Right lobe of liver (tissue), 6 donors: ENCODE measurements at regions of chr11 and their contacts with region 1.

Region 1: DNA sequence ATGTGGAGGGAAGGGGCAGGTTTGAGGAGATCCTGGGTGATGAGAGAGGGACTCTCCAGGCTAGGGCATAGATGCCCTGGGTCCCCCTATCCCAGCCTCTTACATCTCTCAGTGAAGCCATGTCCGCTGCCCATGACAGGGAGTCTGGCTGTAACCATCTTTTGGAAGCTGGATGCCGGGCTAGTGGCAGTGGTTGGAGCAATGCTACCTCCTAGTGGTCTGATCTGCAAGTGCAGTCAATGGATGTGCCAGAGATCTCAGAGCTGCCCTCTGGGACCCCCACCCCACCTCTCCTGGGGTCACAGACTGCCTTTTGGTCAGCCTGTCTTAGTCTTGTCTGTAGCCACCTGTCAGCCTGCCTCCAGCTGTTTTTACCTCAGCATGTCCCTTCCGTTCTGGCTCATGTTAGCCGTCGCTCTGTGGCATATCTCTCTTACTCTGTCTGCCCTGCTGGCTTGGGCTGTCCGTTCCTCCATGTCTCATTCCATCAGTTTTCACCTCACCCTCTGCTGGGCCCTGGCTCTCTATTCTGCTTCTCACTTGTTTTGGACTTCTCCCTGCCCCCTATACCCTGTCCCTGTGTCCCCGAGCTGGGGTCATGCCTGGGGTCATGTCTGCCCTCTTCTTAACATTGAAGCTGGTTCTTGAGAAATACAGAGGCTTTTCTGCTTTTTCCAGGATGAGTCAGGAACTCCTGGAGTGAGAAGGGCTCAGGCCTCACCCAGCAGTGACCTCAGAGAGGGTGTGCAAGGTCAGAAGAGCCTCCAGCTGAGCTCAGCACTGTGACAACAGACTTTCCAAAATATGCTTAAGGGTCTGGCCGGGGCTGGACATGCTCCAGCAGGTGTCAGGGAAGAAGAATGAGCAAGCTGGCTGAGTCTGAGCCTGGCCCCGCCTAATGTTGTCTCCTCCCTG is 52.0 kb upstream of the THY1 start:
- DNase-seq: peak in 2 of 3 donors; percentile 44 to 67
- ATAC-seq: peak; percentile 79 to 89 (median 84)
- H3K4me3 ChIP-seq: no peak overlapping the region
- H3K27ac ChIP-seq: no peak overlapping the region
- H3K4me1 ChIP-seq: peaks cover 0 to 10% (median 2%) of the 10 kb centered on the region in 4 donors
- H3K27me3 ChIP-seq: no peaks in the 10 kb centered on the region
- CTCF ChIP-seq: peak; percentile 83 to 92 (median 87)
- POLR2A ChIP-seq: no peak

Region 2: GRCh38 chr11:119363851-119364590 is 110.9 kb before region 1 on chr11:
- intact Hi-C with region 1: loop called in 1 of 2 experiments (anchors 10 kb)
- DNase-seq: peak; percentile 78 to 85 (median 84)
- ATAC-seq: peak; percentile 32 to 63 (median 55)
- H3K4me3 ChIP-seq: peak overlapping the region; percentile 42 to 73 (median 57)
- H3K27ac ChIP-seq: peak overlapping the region; percentile 51 to 98 (median 81)
- H3K4me1 ChIP-seq: peaks cover 0 to 64% (median 20%) of the 10 kb centered on the region in 4 donors
- H3K27me3 ChIP-seq: no peaks in the 10 kb centered on the region
- CTCF ChIP-seq: no peak
- POLR2A ChIP-seq: peak; percentile 72

Region 3: DNA sequence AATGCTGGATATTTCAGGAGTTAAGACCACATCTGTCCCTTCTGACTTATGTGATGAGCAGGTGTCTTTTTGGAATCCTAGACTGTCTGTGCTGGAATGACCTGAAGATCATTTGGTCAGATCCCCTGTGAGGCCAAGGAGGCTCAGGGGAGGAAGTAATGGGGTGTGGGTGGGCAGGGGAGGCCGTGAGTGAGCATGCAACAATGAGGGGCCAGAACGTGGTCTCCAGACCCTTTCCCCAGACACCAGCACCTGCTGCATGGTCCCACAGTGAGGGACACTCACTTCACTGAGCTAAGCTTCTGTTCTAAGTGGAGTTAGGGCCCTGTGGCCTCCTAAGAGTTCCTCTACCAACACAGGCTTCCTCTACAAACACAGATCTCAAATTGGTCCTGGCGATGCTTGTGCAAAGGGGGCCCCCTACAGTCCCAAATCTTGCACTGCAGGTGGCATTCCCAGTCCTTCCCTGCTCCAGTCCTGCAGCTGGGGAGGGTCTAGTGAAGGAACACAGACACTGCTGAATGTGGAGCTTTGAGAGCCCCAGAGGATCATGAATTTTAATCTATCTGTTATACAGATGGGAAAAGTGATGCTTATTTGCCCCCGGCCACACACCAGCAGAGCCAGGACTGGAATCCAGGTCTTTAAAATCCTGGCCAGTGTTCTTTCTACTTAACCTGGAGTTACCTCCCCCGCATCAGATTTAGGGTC is 100.9 kb before region 1 on chr11:
- intact Hi-C with region 1: loop called (anchors 10 kb)
- DNase-seq: peak in 2 of 3 donors; percentile 65 to 74
- ATAC-seq: peak; percentile 24 to 65 (median 56)
- H3K4me3 ChIP-seq: no peak overlapping the region
- H3K27ac ChIP-seq: peak overlapping the region in 1 of 3 donors; percentile 82
- H3K4me1 ChIP-seq: peaks cover 0 to 60% (median 20%) of the 10 kb centered on the region in 4 donors
- H3K27me3 ChIP-seq: no peaks in the 10 kb centered on the region
- CTCF ChIP-seq: peak; percentile 90 to 92 (median 92)
- POLR2A ChIP-seq: no peak

Region 4: DNA sequence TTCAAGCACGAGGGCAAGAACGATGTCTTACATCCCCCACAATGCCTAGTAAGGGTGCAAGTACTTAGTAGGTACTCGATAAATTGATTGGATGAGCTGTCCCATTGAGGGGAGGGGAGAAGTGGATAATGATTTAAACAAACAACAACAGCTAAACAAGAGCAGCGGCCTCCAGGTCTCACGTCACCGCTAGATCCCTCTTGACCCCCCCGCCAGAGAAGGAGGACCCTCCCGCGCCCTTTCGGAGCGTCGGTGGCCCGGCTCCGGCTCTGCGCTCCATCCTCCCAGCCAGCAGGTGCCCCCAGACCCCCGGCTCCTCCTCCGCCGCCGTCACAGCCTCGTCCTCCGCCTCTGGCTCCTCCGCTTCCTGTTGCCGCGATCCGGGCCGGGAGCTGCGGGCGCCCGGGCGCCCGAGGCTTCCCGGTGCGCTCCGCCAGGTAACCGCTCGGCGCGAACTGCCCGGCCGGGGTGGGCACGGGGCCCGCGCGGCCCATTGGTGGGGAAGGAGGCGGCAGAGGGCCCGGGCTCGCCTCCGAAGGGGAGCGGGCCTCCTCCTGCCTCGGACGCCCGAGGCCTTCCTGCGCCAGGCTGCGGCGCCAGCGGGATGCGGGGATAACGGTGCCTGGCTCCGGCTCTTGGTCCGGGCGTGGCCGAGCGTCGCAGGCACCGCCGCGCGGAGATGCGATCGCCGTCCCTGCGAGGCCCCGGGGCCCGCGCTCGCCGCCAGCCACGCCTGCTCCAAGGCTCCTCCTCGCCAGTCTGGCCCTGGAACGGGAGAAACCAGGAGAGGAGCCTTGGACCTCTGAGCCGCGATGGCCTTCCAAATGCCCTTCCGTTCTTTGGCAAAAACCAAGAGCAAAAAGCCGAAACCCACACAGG is 850.2 kb after region 1 on chr11 and contains the start of gene TLCD5:
- intact Hi-C with region 1: no loop called
- DNase-seq: peak in 2 of 3 donors; percentile 66 to 70
- ATAC-seq: peak; percentile 77 to 81 (median 80)
- H3K4me3 ChIP-seq: peak within 1 kb of the TSS; percentile 47 to 59 (median 59)
- H3K27ac ChIP-seq: peak within 1 kb of the TSS; percentile 56 to 87 (median 62)
- H3K4me1 ChIP-seq: no peaks in the 10 kb centered on the region
- H3K27me3 ChIP-seq: no peaks in the 10 kb centered on the region
- CTCF ChIP-seq: no peak
- POLR2A ChIP-seq: peak; percentile 54
- total RNA-seq, gene TLCD5: 0.07 to 1.3 (median 0.38) TPM